HAP-1 (cell line): ENCODE measurements at regions of chrX and their contacts with region 1.

Region 1: DNA sequence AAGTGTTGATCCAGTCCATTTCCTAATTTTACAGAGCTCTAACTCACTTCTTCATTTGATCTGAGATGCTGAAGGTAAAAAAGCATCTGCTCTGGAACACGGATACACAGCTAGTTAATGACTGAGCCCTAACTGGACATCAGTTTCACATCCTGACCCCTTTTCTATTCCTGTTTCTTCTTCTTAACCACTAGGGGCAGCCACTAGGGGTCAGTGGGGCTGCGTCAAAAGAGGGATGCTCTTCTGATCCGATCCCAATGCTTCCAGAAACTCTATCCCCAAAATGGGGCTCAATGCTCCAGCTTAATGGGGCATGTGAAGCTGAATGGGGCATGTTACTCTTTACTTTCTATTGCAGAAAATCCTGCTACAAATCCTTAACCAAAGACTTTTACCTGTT is 33.4 kb upstream of the PHKA2 start:
- DNase-seq: peak; percentile 40 to 58
- H3K4me3 ChIP-seq: no peak overlapping the region
- H3K4me1 ChIP-seq: no peaks in the 10 kb centered on the region
- H3K27me3 ChIP-seq: no peaks in the 10 kb centered on the region; the same call in 1 of the 2 replicates

Region 2: GRCh38 chrX:19334945-19335626 is 317.8 kb after region 1 on chrX:
- in situ Hi-C with region 1: loop called (anchors 10 kb)
- DNase-seq: peak; percentile 38 to 43
- H3K4me3 ChIP-seq: no peak overlapping the region
- H3K4me1 ChIP-seq: no peaks in the 10 kb centered on the region
- H3K27me3 ChIP-seq: peaks cover 7% of the 10 kb centered on the region